HEK293 (cell line): ENCODE measurements at regions of chr19 and their contacts with region 1.

Region 1: DNA sequence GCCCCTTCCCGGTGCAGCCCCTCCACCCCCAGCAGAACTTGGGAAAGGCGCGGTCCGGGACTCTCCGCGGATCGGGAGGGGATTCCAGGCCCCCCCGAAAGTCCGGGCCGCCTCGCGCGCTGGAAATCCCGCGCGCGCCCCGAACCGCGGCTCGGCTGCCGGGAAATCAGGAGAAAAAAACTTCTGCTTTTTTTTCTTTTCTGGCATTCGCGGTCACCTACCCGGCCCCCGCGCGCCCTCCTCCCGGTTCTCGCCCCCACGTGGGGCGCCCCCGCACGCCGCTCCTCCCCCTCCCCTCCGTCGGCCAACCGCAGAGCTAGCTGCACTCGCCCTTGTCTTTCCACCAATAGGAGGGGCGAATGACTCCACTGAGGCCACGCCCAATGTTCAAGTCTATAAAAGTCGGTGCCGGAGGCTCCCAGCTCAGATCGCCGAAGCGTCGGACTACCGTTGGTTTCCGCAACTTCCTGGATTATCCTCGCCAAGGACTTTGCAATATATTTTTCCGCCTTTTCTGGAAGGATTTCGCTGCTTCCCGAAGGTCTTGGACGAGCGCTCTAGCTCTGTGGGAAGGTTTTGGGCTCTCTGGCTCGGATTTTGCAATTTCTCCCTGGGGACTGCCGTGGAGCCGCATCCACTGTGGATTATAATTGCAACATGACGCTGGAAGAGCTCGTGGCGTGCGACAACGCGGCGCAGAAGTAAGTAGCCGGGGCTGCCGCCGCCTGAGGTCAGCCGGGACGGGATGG is at the start of gene GADD45B:
- H3K4me3 ChIP-seq: peak within 1 kb of the TSS; percentile 95
- H3K27ac ChIP-seq: peak within 1 kb of the TSS; percentile 68
- H3K4me1 ChIP-seq: peaks cover 15% of the 10 kb centered on the region
- CTCF ChIP-seq: no peak

Region 2: GRCh38 chr19:2269244-2269947 is 206.5 kb before region 1 on chr19:
- CTCF ChIA-PET with region 1: no interaction called
- POLR2A ChIA-PET with region 1: interaction called, 18 read pairs
- H3K4me3 ChIP-seq: peak overlapping the region; percentile 99
- H3K27ac ChIP-seq: peak overlapping the region; percentile 98
- H3K4me1 ChIP-seq: 0 out of 2 replicates have a peak, but pooled peaks cover 5% of the 10 kb centered on the region
- CTCF ChIP-seq: peak; percentile 47

Region 3: GRCh38 chr19:2345794-2346663 is 129.8 kb before region 1 on chr19:
- CTCF ChIA-PET with region 1: no interaction called
- POLR2A ChIA-PET with region 1: no interaction called
- H3K4me3 ChIP-seq: no peak overlapping the region
- H3K27ac ChIP-seq: no peak overlapping the region
- H3K4me1 ChIP-seq: no peaks in the 10 kb centered on the region
- CTCF ChIP-seq: no peak

Region 4: DNA sequence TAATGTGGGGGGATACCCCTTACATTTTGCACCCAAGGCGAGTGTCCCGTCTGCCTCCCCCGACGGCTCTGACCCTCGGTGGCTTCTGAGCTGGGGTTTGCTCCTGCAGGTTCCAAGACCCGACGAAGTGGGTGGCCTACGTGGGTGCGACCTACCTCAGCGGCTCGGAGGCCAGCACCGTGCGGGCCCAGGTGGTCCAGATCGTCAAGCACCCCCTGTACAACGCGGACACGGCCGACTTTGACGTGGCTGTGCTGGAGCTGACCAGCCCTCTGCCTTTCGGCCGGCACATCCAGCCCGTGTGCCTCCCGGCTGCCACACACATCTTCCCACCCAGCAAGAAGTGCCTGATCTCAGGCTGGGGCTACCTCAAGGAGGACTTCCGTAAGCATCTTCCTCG is 67.6 kb before region 1 on chr19:
- CTCF ChIA-PET with region 1: no interaction called
- POLR2A ChIA-PET with region 1: no interaction called
- H3K4me3 ChIP-seq: no peak overlapping the region
- H3K27ac ChIP-seq: no peak overlapping the region
- H3K4me1 ChIP-seq: no peaks in the 10 kb centered on the region
- CTCF ChIP-seq: no peak

Region 5: GRCh38 chr19:2494444-2495129 is 18.7 kb after region 1 on chr19:
- CTCF ChIA-PET with region 1: interaction called, 4 read pairs
- POLR2A ChIA-PET with region 1: interaction called, 168 read pairs
- H3K4me3 ChIP-seq: no peak overlapping the region; the same call in 1 of the 2 replicates
- H3K27ac ChIP-seq: no peak overlapping the region; the same call in 1 of the 2 replicates
- H3K4me1 ChIP-seq: no peaks in the 10 kb centered on the region
- CTCF ChIP-seq: no peak

Region 6: GRCh38 chr19:2532252-2533071 is 56.6 kb after region 1 on chr19:
- CTCF ChIA-PET with region 1: interaction called, 3 read pairs
- POLR2A ChIA-PET with region 1: interaction called, 374 read pairs
- H3K4me3 ChIP-seq: no peak overlapping the region
- H3K27ac ChIP-seq: no peak overlapping the region
- H3K4me1 ChIP-seq: peaks cover 4% of the 10 kb centered on the region; the same call in 1 of the 2 replicates
- CTCF ChIP-seq: no peak

Region 7: GRCh38 chr19:2588081-2588777 is 112.4 kb after region 1 on chr19:
- CTCF ChIA-PET with region 1: interaction called, 4 read pairs
- POLR2A ChIA-PET with region 1: interaction called, 23 read pairs
- H3K4me3 ChIP-seq: no peak overlapping the region
- H3K27ac ChIP-seq: no peak overlapping the region
- H3K4me1 ChIP-seq: no peaks in the 10 kb centered on the region
- CTCF ChIP-seq: no peak

Region 8: GRCh38 chr19:2618611-2619010 is 142.7 kb after region 1 on chr19:
- CTCF ChIA-PET with region 1: interaction called, 43 read pairs
- POLR2A ChIA-PET with region 1: interaction called, 35 read pairs
- H3K4me3 ChIP-seq: no peak overlapping the region
- H3K27ac ChIP-seq: no peak overlapping the region
- H3K4me1 ChIP-seq: no peaks in the 10 kb centered on the region
- CTCF ChIP-seq: no peak